ENCODE measurements at regions of chr21 and their contacts with region 1.

Region 1: GRCh38 chr21:44792702-44793591 is 8.7 kb downstream of the UBE2G2 start:
- DNase-seq: peak; percentile 80
- CTCF ChIP-seq: peak; percentile 84

Region 2: GRCh38 chr21:44338971-44339910 is 453.7 kb before region 1 on chr21 and contains the start of gene CFAP410:
- in situ Hi-C with region 1: loop called (anchors 25 kb)
- DNase-seq: peak; percentile 99
- CTCF ChIP-seq: no peak

Region 3: DNA sequence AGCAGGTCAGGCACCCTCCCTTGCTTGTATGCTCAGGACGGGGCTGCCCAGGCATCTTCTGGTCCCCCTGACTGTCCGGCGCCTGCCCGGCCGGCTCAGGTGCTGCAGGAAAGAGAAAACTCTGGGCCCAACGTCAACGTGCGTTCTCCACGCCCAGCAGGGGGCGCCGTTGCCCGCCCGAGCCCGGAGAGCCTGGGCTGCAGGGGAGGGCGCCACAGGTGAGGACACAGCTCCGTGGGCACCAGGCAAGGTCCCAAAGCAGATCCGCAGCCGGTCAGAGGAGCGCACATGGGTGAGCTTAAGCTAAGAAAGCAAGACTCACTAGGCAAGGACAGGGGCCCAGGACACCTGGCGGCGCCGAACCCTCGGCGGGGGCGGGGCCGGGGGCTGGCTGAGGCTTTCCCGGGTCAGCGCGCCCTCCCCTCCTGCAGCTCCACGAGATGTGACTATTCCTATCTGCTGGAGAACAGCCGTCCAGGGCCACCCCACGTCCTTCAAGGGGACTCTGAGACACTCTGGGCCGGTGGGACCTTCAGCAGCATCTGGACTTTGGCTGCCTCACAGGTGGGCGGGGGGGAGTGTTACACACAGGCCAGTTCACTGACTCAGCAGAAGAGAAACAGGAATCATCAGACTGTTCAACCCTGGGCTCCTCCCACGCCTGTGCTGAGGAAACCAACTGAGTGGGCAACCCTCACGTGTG is 282.3 kb before region 1 on chr21:
- in situ Hi-C with region 1: loop called (anchors 5 kb)
- DNase-seq: peak; percentile 92
- CTCF ChIP-seq: peak; percentile 96

Region 4: DNA sequence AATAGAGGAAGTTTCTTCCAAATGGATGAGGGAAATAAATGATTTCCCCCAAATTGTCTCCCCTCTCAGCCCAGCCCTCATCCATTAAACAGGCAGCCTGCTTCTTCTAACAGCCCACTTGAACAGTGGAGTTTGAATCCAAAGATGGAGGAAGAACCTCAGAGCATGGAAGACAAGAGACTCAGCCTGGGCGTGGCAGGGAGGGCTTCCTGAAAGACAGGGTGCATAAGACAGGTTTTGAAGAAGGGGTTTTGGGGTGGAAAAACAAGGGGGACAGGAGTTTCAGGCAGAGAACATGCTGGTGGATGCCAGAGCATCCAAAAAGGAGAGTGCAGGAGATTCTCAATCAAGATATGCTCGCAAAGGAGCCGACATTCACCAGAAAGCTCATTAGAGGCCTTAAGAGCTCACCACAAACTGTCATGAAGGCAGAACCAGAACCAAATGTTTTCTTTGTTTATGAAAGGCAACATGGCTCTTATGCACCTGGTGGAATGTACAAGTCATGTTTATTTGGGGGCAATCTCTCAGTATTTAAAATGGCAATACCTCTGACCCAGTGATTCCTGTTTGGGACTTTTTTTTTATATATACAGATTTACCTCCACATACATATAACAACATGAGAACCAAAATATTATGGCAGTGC is 55.1 kb before region 1 on chr21:
- in situ Hi-C with region 1: no loop called
- DNase-seq: no peak
- CTCF ChIP-seq: no peak

Region 5: DNA sequence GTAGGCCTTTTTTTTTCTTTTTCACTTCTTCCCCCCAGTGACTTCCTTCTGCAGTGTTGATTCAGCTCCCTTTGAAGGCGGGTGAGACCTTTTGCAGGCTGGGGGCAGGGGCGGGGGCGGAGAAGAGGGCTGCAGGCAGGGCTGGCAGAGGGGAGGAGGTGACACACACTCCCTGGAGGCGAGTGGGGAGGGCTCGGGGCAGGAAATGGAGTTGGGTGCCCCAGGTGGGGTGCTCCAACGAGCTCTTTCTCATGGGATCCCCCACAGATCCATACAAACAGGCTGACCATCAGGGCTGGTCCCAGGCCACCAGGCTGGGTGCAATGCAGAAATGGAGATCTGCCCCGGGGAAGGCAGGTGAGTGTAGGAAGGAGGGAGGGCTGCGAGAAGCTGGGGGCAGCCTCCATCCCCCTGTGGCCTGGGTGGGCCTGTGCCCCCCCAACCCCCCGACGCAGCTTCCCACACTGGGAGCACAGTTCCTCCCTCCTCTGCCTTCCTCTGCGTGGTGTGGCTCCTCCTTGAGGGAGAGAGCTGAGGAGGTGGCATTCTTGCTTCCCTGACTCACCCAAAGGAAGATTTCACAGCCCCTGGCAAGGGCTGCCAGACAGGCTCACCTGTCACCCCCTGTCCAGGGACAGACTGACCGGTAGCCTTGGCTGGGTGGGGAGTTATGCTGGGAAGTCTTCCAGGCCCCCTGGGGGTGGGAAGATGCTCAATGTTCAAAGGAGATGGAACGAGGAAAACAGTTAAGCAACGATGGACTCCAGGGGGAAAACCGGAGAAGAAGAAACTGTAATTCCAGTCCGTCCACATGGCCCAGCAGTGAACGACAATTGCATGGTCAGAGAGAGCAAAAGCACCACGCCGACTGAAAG is 134.9 kb after region 1 on chr21:
- in situ Hi-C with region 1: loop called (anchors 10 kb)
- DNase-seq: peak; percentile 77
- CTCF ChIP-seq: no peak

Region 6: GRCh38 chr21:45109831-45110492 is 317.0 kb after region 1 on chr21:
- in situ Hi-C with region 1: loop called (anchors 25 kb)
- DNase-seq: peak; percentile 88
- CTCF ChIP-seq: no peak

Measured in GM13977 (cell line).